ENCODE measurements at regions of chr6 and their contacts with region 1.

Region 1: GRCh38 chr6:36985808-36986703 is at the start of gene MTCH1:
- DNase-seq: peak; percentile 84 to 92 (median 90)
- H3K4me3 ChIP-seq: peak within 1 kb of the TSS; percentile 91
- H3K4me3 Mint-ChIP-seq: peak within 1 kb of the TSS in 5 of 7 donors; percentile 90 to 99 (median 97)
- H3K27ac ChIP-seq: peak within 1 kb of the TSS; percentile 82
- H3K27ac Mint-ChIP-seq: peak within 1 kb of the TSS; percentile 87 to 99 (median 97)
- H3K4me1 ChIP-seq: peaks cover 37% of the 10 kb centered on the region
- H3K4me1 Mint-ChIP-seq: peaks cover 20 to 28% (median 22%) of the 10 kb centered on the region in 3 donors
- H3K27me3 ChIP-seq: no peaks in the 10 kb centered on the region
- H3K27me3 Mint-ChIP-seq: peaks cover 0 to 11% of the 10 kb centered on the region in 2 donors
- total RNA-seq, gene MTCH1: 116 to 126 TPM

Region 2: GRCh38 chr6:36874443-36875249 is 111.4 kb before region 1 on chr6 and contains the start of gene PPIL1:
- CTCF ChIA-PET with region 1: interaction called, 4 read pairs
- POLR2A ChIA-PET with region 1: interaction called, 15 read pairs
- DNase-seq: peak; percentile 76 to 92 (median 89)
- H3K4me3 ChIP-seq: peak within 1 kb of the TSS; percentile 87
- H3K4me3 Mint-ChIP-seq: peak within 1 kb of the TSS; percentile 96 to 100 (median 100)
- H3K27ac ChIP-seq: peak within 1 kb of the TSS; percentile 89
- H3K27ac Mint-ChIP-seq: peak within 1 kb of the TSS; percentile 94 to 100 (median 99)
- H3K4me1 ChIP-seq: peaks cover 24% of the 10 kb centered on the region
- H3K4me1 Mint-ChIP-seq: peaks cover 34 to 45% (median 37%) of the 10 kb centered on the region in 3 donors
- H3K27me3 ChIP-seq: peaks cover 3% of the 10 kb centered on the region
- H3K27me3 Mint-ChIP-seq: peaks cover 13 to 23% of the 10 kb centered on the region in 2 donors
- total RNA-seq, gene PPIL1: 66.6 to 68.8 TPM